ENCODE measurements at regions of chr11 and their contacts with region 1.

Region 1: DNA sequence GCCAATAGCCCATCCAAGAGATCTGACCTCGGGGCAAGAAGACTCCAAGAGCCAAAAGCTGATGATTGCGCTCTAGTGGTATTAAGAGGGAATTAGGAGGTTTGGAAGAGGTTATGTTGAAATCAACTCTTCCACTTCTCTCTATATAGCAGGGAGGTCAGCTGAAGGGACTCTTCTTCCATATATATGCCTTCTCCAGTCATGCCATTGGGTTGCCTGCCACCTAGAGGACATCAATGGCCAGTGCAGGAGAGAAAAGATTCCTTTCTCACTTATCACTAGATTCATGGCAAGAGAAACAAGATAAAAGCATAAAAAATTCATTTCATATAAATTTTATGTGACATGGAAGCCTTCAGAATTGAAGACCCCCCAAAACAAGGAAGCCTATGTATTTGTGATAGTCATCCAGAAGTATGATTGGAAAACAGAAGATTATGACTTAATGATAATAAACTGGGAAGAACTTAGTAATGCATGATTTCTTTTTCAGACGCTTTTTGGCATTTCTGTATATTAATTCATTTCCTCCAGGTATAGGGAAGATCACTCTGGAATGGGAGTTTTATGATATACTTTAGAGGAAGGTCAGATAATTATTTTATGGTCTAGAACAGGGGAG is 435.1 kb upstream of the DDI1 start:
- DNase-seq: peak; percentile 75
- H3K4me3 Mint-ChIP-seq: no peak overlapping the region
- H3K27ac Mint-ChIP-seq: no peak overlapping the region
- H3K4me1 Mint-ChIP-seq: no peaks in the 10 kb centered on the region
- H3K27me3 Mint-ChIP-seq: peaks cover 12% of the 10 kb centered on the region
- CTCF ChIP-seq: peak; percentile 85

Region 2: GRCh38 chr11:103108933-103109817 is 492.2 kb before region 1 on chr11 and contains the start of gene DYNC2H1:
- CTCF ChIA-PET with region 1: interaction called, 3 read pairs
- POLR2A ChIA-PET with region 1: no interaction called
- intact Hi-C with region 1: loop called (anchors 5 kb)
- DNase-seq: peak; percentile 87
- H3K4me3 Mint-ChIP-seq: peak within 1 kb of the TSS; percentile 82
- H3K27ac Mint-ChIP-seq: peak within 1 kb of the TSS; percentile 95
- H3K4me1 Mint-ChIP-seq: peaks cover 13% of the 10 kb centered on the region
- H3K27me3 Mint-ChIP-seq: no peaks in the 10 kb centered on the region
- CTCF ChIP-seq: peak; percentile 29
- total RNA-seq, gene DYNC2H1: 23.0 and 23.5 TPM in 2 replicates

Region 3: DNA sequence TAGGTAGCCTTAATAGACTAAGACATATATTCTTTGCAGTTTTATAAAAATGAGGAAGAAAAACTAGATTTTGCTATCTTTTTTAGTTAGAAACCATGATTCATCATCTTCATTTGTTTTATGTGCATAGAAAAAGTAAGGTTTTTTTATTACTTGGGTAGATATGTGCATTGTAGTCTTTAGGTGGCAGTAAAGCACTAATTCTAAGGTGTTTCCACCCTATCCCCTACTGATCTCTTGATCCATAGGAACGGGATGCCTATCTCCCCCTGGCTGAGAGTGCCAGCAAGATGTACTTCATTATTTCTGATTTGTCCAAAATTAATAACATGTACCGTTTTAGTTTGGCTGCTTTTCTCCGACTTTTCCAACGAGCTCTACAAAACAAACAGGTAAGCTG is 344.0 kb before region 1 on chr11:
- CTCF ChIA-PET with region 1: interaction called, 16 read pairs
- POLR2A ChIA-PET with region 1: no interaction called
- intact Hi-C with region 1: loop called (anchors 1 kb)
- DNase-seq: peak; percentile 26
- H3K4me3 Mint-ChIP-seq: no peak overlapping the region
- H3K27ac Mint-ChIP-seq: no peak overlapping the region
- H3K4me1 Mint-ChIP-seq: no peaks in the 10 kb centered on the region
- H3K27me3 Mint-ChIP-seq: no peaks in the 10 kb centered on the region
- CTCF ChIP-seq: peak; percentile 23

Region 4: GRCh38 chr11:103464420-103464819 is 136.9 kb before region 1 on chr11:
- CTCF ChIA-PET with region 1: interaction called, 3 read pairs
- POLR2A ChIA-PET with region 1: no interaction called
- intact Hi-C with region 1: loop called (anchors 5 kb)
- DNase-seq: no peak
- H3K4me3 Mint-ChIP-seq: no peak overlapping the region
- H3K27ac Mint-ChIP-seq: no peak overlapping the region
- H3K4me1 Mint-ChIP-seq: no peaks in the 10 kb centered on the region
- H3K27me3 Mint-ChIP-seq: no peaks in the 10 kb centered on the region
- CTCF ChIP-seq: no peak

Region 5: DNA sequence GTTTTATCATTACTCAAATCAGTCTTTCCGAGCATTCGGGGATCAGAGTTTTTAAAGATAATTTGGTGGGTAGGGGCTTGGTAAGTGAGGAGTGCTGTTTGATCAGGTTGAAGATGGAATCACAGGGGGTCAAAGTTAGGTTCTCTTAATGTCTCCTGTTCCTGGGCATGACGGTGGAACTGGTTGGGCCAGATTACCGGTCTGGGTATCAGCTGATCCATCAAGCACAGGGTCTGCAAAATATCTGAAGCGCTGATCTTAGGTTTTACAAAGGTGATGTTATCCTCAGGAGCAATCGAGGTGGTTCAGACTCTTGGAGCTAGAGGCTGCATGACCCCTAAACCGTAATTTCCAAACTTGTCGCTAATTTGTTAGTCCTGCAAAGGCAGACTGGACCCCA is 108.5 kb before region 1 on chr11:
- CTCF ChIA-PET with region 1: no interaction called
- POLR2A ChIA-PET with region 1: no interaction called
- intact Hi-C with region 1: no loop called
- DNase-seq: no peak
- H3K4me3 Mint-ChIP-seq: no peak overlapping the region
- H3K27ac Mint-ChIP-seq: no peak overlapping the region
- H3K4me1 Mint-ChIP-seq: no peaks in the 10 kb centered on the region
- H3K27me3 Mint-ChIP-seq: no peaks in the 10 kb centered on the region
- CTCF ChIP-seq: no peak

Region 6: GRCh38 chr11:103537904-103538502 is 63.3 kb before region 1 on chr11:
- CTCF ChIA-PET with region 1: interaction called, 7 read pairs
- POLR2A ChIA-PET with region 1: no interaction called
- intact Hi-C with region 1: loop called (anchors 5 kb)
- DNase-seq: peak; percentile 59
- H3K4me3 Mint-ChIP-seq: no peak overlapping the region
- H3K27ac Mint-ChIP-seq: no peak overlapping the region
- H3K4me1 Mint-ChIP-seq: peaks cover 13% of the 10 kb centered on the region
- H3K27me3 Mint-ChIP-seq: no peaks in the 10 kb centered on the region
- CTCF ChIP-seq: peak; percentile 52

Region 7: DNA sequence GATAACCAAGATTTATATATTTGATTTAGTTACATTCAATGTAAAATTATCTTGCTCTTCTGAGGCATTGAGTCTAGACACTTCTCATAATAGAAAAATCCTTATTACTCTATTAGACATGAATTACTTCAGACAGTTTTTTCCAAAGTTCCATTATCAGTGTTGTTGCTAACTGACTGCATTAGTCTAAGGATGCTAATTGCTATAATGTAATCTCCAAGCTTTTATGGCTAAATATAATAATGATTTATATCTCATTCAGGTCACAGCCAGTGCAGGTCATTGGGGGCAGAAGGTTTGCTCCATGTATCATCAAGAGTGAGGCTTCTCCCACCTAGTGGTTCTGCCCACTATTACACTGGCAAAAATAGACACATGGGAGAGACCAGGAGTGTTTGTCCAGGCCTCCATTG is 57.9 kb after region 1 on chr11:
- CTCF ChIA-PET with region 1: no interaction called
- POLR2A ChIA-PET with region 1: no interaction called
- intact Hi-C with region 1: no loop called
- DNase-seq: peak; percentile 58
- H3K4me3 Mint-ChIP-seq: no peak overlapping the region
- H3K27ac Mint-ChIP-seq: no peak overlapping the region
- H3K4me1 Mint-ChIP-seq: no peaks in the 10 kb centered on the region
- H3K27me3 Mint-ChIP-seq: no peaks in the 10 kb centered on the region
- CTCF ChIP-seq: peak; percentile 29

Region 8: DNA sequence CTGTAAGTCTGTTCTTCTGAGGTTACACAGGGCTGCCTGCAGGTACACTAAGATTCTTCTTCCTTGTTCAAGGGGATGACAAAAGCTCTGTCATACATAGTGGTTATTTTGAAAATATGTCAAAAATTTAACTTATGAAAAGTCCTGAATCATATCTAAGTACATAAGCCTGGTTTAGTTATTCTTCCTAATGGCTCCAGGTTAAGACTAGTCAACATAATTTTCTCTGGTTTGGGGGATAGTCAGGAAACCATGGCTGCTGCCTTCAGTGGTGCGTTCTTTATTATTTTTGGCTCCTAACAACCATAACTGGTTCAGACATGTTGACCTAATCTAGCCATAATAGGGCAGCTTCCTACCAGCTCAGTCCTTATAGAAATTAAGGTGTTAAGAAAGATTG is 177.7 kb after region 1 on chr11:
- CTCF ChIA-PET with region 1: no interaction called
- POLR2A ChIA-PET with region 1: no interaction called
- intact Hi-C with region 1: no loop called
- DNase-seq: peak; percentile 66
- H3K4me3 Mint-ChIP-seq: no peak overlapping the region
- H3K27ac Mint-ChIP-seq: no peak overlapping the region
- H3K4me1 Mint-ChIP-seq: peaks cover 6% of the 10 kb centered on the region
- H3K27me3 Mint-ChIP-seq: no peaks in the 10 kb centered on the region
- CTCF ChIP-seq: no peak